Transverse colon (tissue), 4 donors: ENCODE measurements at regions of chr2 and their contacts with region 1.

Region 1: GRCh38 chr2:166762746-166763145 is 125.5 kb upstream of the XIRP2 start:
- DNase-seq: no peak
- H3K4me3 ChIP-seq: no peak overlapping the region
- H3K27ac ChIP-seq: no peak overlapping the region
- H3K4me1 ChIP-seq: no peaks in the 10 kb centered on the region
- H3K27me3 ChIP-seq: no peaks in the 10 kb centered on the region
- CTCF ChIP-seq: no peak
- EP300 ChIP-seq: no peak
- POLR2A ChIP-seq: no peak

Region 2: DNA sequence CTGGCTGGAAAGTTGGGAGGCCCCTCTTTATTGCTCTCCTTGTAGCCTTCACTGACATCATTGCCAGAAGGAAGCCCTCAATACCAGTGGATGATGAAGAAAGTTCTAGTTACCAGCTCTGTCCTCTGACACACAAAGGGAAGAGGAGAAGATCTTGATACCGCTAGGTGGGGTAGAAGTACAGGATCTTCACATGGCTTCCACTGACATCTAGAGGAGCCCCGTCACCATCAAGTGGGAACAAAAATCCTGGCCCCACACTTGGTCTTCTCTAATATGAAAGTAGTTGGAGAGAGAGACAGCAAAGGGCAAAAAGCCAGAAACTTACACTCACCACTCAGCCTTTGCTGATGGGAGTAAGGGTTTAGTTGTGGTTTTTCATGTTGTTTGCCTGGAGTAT is 138.0 kb after region 1 on chr2:
- in situ Hi-C with region 1: no loop called
- intact Hi-C with region 1: no loop called
- DNase-seq: no peak
- H3K4me3 ChIP-seq: no peak overlapping the region
- H3K27ac ChIP-seq: no peak overlapping the region
- H3K4me1 ChIP-seq: no peaks in the 10 kb centered on the region
- H3K27me3 ChIP-seq: no peaks in the 10 kb centered on the region
- CTCF ChIP-seq: no peak
- EP300 ChIP-seq: no peak
- POLR2A ChIP-seq: no peak

Region 3: DNA sequence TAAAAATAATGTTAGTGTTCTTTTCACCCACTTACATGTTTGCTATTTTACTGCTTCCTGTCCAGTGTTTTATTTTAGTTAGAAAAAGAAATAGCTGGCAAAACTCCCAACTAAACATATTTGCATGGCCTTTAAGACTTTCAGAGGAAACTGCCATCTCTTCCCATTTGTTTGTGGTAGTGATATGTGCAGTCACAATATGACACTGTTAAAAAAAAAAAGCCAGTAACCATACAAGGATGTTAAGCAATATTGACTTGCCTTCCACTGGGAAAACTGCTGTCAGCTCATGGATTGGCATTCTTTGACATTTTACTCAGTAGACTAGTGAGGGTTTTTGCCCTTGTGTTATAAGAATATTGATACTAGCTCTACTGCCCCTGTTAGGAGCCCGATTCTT is 154.7 kb after region 1 on chr2:
- in situ Hi-C with region 1: no loop called
- intact Hi-C with region 1: loop called (anchors 2 kb)
- DNase-seq: no peak
- H3K4me3 ChIP-seq: no peak overlapping the region
- H3K27ac ChIP-seq: no peak overlapping the region
- H3K4me1 ChIP-seq: no peaks in the 10 kb centered on the region
- H3K27me3 ChIP-seq: no peaks in the 10 kb centered on the region
- CTCF ChIP-seq: no peak
- EP300 ChIP-seq: no peak
- POLR2A ChIP-seq: no peak